Panc1 (cell line): ENCODE measurements at regions of chr12 and their contacts with region 1.

Region 1: DNA sequence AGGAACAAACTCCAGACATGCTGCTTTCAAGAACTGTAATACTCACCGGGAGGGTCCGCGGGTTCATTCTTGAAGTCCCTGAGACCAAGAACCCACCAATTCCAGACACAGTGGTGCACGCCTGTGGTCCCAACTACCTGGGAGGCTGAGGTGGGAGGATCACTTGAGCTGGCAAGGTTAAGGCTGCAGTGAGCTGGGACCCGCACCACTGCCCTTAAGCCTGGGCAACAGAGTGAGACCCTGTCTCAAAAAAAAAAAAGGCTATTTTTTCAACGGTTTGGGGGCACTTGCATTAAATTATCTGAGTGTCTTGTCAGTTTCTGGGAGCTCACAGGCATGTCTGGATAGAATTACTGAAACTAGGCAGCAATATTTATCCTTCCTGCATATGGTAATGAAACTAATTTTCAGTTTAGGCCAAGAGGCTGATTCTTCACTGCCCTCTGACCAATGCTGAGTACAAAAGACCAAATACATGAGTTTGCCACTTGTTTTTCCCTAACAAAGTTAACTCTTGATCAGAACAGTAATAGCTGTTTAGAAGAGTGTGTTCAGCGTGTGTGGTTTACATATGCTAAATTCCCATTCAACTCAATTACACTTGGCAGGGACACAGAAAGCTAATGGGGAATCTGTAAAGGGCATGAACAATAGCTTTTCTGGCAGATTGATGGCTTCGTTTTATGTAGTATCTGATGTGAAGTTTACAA is 65.8 kb upstream of the RASSF3 start:
- DNase-seq: no peak
- ATAC-seq: no peak
- H3K4me3 ChIP-seq: no peak overlapping the region
- H3K27ac ChIP-seq: no peak overlapping the region
- H3K4me1 ChIP-seq: no peaks in the 10 kb centered on the region
- H3K27me3 ChIP-seq: no peaks in the 10 kb centered on the region
- CTCF ChIP-seq: no peak

Region 2: GRCh38 chr12:64256166-64256800 is 288.2 kb before region 1 on chr12:
- CTCF ChIA-PET with region 1: interaction called, 10 read pairs
- POLR2A ChIA-PET with region 1: no interaction called
- in situ Hi-C with region 1: no loop called
- intact Hi-C with region 1: no loop called
- DNase-seq: no peak
- ATAC-seq: peak; percentile 60
- H3K4me3 ChIP-seq: no peak overlapping the region
- H3K27ac ChIP-seq: no peak overlapping the region
- H3K4me1 ChIP-seq: no peaks in the 10 kb centered on the region
- H3K27me3 ChIP-seq: no peaks in the 10 kb centered on the region
- CTCF ChIP-seq: peak; percentile 66; the same call in 1 of the 2 replicates

Region 3: DNA sequence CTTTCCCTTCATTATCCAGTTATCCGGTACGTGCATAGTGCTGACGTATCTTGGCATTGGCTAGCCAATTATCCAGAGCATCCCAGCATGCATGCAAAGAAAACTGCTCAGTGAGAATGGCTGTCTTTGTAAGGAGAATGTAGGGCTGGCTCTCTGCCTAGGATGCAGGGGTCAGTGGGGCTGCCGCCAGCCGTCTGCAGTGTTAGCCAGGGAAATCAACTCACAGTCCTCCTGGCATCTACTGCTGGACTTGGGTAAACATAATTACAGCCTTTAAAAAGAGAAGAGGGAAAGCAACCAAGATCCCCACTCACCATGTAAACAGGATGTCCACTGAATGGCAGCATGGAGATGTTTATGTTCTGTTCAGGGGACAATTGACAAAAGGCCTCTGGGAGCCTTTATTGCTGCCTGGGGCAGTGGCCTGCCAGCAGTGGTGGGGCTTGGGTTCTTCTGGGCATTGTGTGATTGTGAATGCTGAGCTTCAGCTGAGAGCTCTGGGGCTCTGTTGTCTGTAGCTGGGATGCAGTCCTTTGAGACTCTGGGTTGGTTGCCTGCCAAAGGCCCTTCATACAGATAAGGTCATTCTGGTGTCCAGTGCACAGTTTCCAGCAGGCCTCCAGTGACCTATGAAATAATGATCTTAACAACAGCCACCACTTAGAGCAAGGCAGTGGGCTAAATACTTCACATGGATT is 401.8 kb after region 1 on chr12:
- CTCF ChIA-PET with region 1: no interaction called
- POLR2A ChIA-PET with region 1: no interaction called
- in situ Hi-C with region 1: no loop called
- intact Hi-C with region 1: no loop called
- DNase-seq: no peak
- ATAC-seq: peak; percentile 58; the same call in 1 of the 2 replicates
- H3K4me3 ChIP-seq: no peak overlapping the region
- H3K27ac ChIP-seq: no peak overlapping the region
- H3K4me1 ChIP-seq: no peaks in the 10 kb centered on the region; the same call in 1 of the 2 replicates
- H3K27me3 ChIP-seq: no peaks in the 10 kb centered on the region
- CTCF ChIP-seq: no peak